Activated naive CD4-positive, alpha-beta T cell treated with anti-CD3 and anti-CD28 coated beads, Interleukin-2, amount 10 ng/mL, durations not matched to agents 7 days and 5 days (primary cell): ENCODE measurements at regions of chr4 and their contacts with region 1.

Region 1: GRCh38 chr4:184745831-184746795 is 12.2 kb upstream of the CENPU start:
- DNase-seq: peak; percentile 85
- H3K4me3 Mint-ChIP-seq: no peak overlapping the region
- H3K27ac Mint-ChIP-seq: peak overlapping the region; percentile 71
- H3K4me1 Mint-ChIP-seq: peaks cover 13% of the 10 kb centered on the region
- H3K27me3 Mint-ChIP-seq: peaks cover 14% of the 10 kb centered on the region

Region 2: DNA sequence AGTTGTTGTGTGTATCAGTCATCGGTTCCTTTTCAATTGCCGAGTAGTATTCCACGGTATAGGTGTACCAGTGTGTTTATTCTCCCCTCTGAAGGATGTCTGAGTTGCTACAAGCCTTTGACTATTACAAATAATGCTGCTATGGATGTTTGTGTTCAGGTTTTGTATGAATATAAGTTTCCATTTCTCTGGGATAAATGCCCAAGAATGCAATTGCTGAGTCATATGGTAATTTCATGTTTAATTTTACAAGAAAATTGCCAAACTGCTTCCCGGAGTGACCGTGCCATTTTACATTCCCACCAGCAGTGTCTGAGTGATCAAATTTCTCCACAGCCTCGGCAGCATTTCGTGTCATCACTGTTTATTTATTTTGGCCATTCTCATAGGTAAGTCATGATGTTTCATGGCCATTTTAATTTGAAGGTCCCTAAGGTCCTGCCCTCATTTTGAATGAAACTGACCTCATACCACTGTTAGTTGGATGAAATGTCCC is 345.7 kb before region 1 on chr4:
- CTCF ChIA-PET with region 1: no interaction called
- DNase-seq: no peak
- H3K4me3 Mint-ChIP-seq: no peak overlapping the region
- H3K27ac Mint-ChIP-seq: peak overlapping the region; percentile 42
- H3K4me1 Mint-ChIP-seq: peaks cover 18% of the 10 kb centered on the region
- H3K27me3 Mint-ChIP-seq: no peaks in the 10 kb centered on the region

Region 3: GRCh38 chr4:184641022-184641421 is 105.1 kb before region 1 on chr4:
- CTCF ChIA-PET with region 1: no interaction called
- DNase-seq: no peak
- H3K4me3 Mint-ChIP-seq: no peak overlapping the region
- H3K27ac Mint-ChIP-seq: no peak overlapping the region
- H3K4me1 Mint-ChIP-seq: peaks cover 73% of the 10 kb centered on the region
- H3K27me3 Mint-ChIP-seq: no peaks in the 10 kb centered on the region

Region 4: GRCh38 chr4:184762100-184762499 is 16.0 kb after region 1 on chr4:
- CTCF ChIA-PET with region 1: interaction called, 16 read pairs
- DNase-seq: peak; percentile 71
- H3K4me3 Mint-ChIP-seq: peak overlapping the region; percentile 45
- H3K27ac Mint-ChIP-seq: peak overlapping the region; percentile 98
- H3K4me1 Mint-ChIP-seq: peaks cover 34% of the 10 kb centered on the region
- H3K27me3 Mint-ChIP-seq: no peaks in the 10 kb centered on the region

Region 5: GRCh38 chr4:184819786-184820185 is 73.7 kb after region 1 on chr4:
- CTCF ChIA-PET with region 1: interaction called, 16 read pairs
- DNase-seq: no peak
- H3K4me3 Mint-ChIP-seq: no peak overlapping the region
- H3K27ac Mint-ChIP-seq: no peak overlapping the region
- H3K4me1 Mint-ChIP-seq: peaks cover 57% of the 10 kb centered on the region
- H3K27me3 Mint-ChIP-seq: no peaks in the 10 kb centered on the region

Region 6: GRCh38 chr4:184907216-184907615 is 161.1 kb after region 1 on chr4:
- CTCF ChIA-PET with region 1: interaction called, 19 read pairs
- DNase-seq: no peak
- H3K4me3 Mint-ChIP-seq: no peak overlapping the region
- H3K27ac Mint-ChIP-seq: no peak overlapping the region
- H3K4me1 Mint-ChIP-seq: peaks cover 10% of the 10 kb centered on the region
- H3K27me3 Mint-ChIP-seq: peaks cover 12% of the 10 kb centered on the region

Region 7: GRCh38 chr4:184932343-184932742 is 186.2 kb after region 1 on chr4:
- CTCF ChIA-PET with region 1: no interaction called
- DNase-seq: no peak
- H3K4me3 Mint-ChIP-seq: no peak overlapping the region
- H3K27ac Mint-ChIP-seq: no peak overlapping the region
- H3K4me1 Mint-ChIP-seq: no peaks in the 10 kb centered on the region
- H3K27me3 Mint-ChIP-seq: peaks cover 9% of the 10 kb centered on the region

Region 8: GRCh38 chr4:184983672-184984356 is 237.7 kb after region 1 on chr4:
- CTCF ChIA-PET with region 1: interaction called, 26 read pairs
- DNase-seq: peak; percentile 67
- H3K4me3 Mint-ChIP-seq: no peak overlapping the region
- H3K27ac Mint-ChIP-seq: no peak overlapping the region
- H3K4me1 Mint-ChIP-seq: no peaks in the 10 kb centered on the region
- H3K27me3 Mint-ChIP-seq: no peaks in the 10 kb centered on the region

Region 9: GRCh38 chr4:185005216-185005819 is 259.2 kb after region 1 on chr4:
- CTCF ChIA-PET with region 1: interaction called, 12 read pairs
- DNase-seq: peak; percentile 85
- H3K4me3 Mint-ChIP-seq: no peak overlapping the region
- H3K27ac Mint-ChIP-seq: no peak overlapping the region
- H3K4me1 Mint-ChIP-seq: peaks cover 9% of the 10 kb centered on the region
- H3K27me3 Mint-ChIP-seq: peaks cover 72% of the 10 kb centered on the region